ENCODE measurements at regions of chr6 and their contacts with region 1.

Region 1: DNA sequence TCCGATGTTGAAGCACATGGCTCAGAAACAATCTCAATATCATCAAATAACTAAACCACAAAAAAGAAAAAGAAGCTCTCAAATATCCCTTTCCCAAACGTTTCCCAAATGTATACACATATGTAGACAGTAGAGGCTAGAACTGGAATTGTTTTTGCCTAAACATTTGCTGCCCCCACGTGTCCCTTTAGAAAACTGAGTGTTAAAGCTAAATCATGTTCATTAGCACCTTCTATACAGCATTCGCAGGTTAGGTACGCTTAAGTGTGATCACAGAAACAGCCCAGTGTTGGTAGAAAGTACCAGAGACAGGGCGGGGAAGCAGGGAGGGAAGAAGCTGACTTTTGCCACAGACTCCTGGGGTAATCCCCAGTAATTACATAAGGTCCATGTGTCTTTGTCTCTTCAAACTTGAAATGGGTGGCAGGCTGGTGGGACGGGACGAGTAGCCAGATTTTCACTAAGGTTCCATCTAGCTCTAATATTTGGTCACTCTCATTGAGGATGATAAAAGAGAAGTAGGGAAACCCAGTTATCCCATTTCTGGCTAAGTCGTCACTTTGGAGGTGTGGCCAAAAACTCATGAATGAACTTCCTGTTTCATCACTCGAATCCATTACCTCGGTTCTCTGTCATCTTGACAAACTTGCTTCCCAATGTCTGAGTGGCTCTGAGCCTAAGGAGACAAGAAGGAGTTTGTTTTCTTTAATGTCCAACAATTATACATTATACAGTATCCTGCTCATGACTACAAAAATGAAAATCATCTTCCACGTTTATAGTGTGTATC is 15.0 kb upstream of the TFAP2A start:
- DNase-seq: peak in 1 of 2 donors; percentile 81
- H3K4me3 ChIP-seq: no peak overlapping the region
- H3K27ac ChIP-seq: no peak overlapping the region
- H3K4me1 ChIP-seq: peaks cover 11 to 18% (median 18%) of the 10 kb centered on the region in 4 donors
- H3K27me3 ChIP-seq: peaks cover 0 to 61% (median 21%) of the 10 kb centered on the region in 3 donors
- CTCF ChIP-seq: peak in 4 of 7 experiments; percentile 21 to 64 (median 44)
- EP300 ChIP-seq: no peak
- POLR2A ChIP-seq: no peak

Region 2: GRCh38 chr6:8983188-8983688 is 1446.6 kb before region 1 on chr6:
- intact Hi-C with region 1: loop called (anchors 5 kb)
- DNase-seq: peak; percentile 66 to 86
- H3K4me3 ChIP-seq: peak overlapping the region in 1 of 4 donors; percentile 25
- H3K27ac ChIP-seq: no peak overlapping the region
- H3K4me1 ChIP-seq: peaks cover 0 to 9% (median 8%) of the 10 kb centered on the region in 4 donors
- H3K27me3 ChIP-seq: no peaks in the 10 kb centered on the region
- CTCF ChIP-seq: peak in 5 of 7 experiments; percentile 45 to 98 (median 93)
- EP300 ChIP-seq: no peak
- POLR2A ChIP-seq: no peak

Region 3: GRCh38 chr6:10030942-10031537 is 398.8 kb before region 1 on chr6:
- intact Hi-C with region 1: loop called (anchors 10 kb)
- DNase-seq: peak in 1 of 2 donors; percentile 5
- H3K4me3 ChIP-seq: no peak overlapping the region
- H3K27ac ChIP-seq: no peak overlapping the region
- H3K4me1 ChIP-seq: peaks cover 0 to 9% (median 4%) of the 10 kb centered on the region in 4 donors
- H3K27me3 ChIP-seq: no peaks in the 10 kb centered on the region
- CTCF ChIP-seq: peak in 4 of 7 experiments; percentile 15 to 56 (median 38)
- EP300 ChIP-seq: no peak
- POLR2A ChIP-seq: no peak

Region 4: GRCh38 chr6:10478187-10479040 is 48.6 kb after region 1 on chr6:
- intact Hi-C with region 1: no loop called
- DNase-seq: peak in 1 of 2 donors; percentile 59
- H3K4me3 ChIP-seq: no peak overlapping the region
- H3K27ac ChIP-seq: no peak overlapping the region
- H3K4me1 ChIP-seq: peaks cover 0 to 3% (median 0%) of the 10 kb centered on the region in 4 donors
- H3K27me3 ChIP-seq: no peaks in the 10 kb centered on the region
- CTCF ChIP-seq: peak in 5 of 7 experiments; percentile 51 to 80 (median 63)
- EP300 ChIP-seq: no peak
- POLR2A ChIP-seq: no peak

Region 5: GRCh38 chr6:10582774-10583508 is 153.1 kb after region 1 on chr6:
- intact Hi-C with region 1: no loop called
- DNase-seq: peak; percentile 67 to 83
- H3K4me3 ChIP-seq: no peak overlapping the region
- H3K27ac ChIP-seq: peak overlapping the region; percentile 52 to 85 (median 74)
- H3K4me1 ChIP-seq: peaks cover 45 to 81% (median 61%) of the 10 kb centered on the region in 4 donors
- H3K27me3 ChIP-seq: no peaks in the 10 kb centered on the region
- CTCF ChIP-seq: no peak
- EP300 ChIP-seq: no peak
- POLR2A ChIP-seq: no peak